B cell (primary cell): ENCODE measurements at regions of chr5 and their contacts with region 1.

Region 1: DNA sequence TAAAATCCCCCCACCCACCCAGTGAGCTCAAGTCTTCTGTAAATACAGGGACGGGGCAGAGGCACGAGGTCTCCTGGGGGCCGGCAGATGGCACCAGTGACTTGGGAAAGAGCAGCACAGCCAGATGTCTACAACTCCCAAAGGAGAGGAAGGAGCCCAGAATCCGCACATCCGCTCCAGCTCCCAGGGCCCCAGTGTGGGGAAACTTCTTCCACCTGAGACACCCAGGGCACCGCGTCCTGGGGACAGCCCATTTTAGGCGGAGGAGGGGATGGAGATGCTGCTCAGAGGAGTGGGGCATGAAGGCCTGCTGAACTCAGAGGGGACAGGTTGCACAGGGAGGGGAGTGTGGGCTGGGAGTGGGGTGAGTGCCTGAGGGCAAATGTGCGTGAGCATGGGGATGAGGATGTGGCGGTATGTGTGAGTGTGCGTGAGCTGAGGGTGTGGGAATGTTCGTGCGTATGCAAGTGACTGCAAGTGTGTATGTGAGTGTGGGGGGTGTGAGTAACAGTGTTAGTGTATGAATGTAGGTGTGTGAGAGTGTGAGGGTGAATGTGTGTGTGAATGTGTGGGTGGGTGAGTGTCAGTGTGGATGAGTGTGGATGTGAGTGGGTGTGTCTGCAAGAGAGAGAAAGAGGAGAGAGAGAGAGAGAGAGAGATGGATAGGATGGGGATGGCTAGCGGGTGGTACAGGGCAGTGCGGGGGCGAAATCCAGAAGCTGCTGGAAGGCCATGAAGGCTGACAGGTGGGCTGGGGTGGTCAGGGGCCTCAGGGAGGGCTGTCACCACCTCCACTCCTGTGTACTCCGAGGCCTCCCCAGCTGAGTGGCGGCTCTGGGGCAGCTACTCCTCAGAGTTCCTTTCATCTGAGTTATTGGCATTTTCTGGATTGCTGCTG is 63.5 kb downstream of the DUSP1 start:
- DNase-seq: peak; percentile 31
- ATAC-seq: peak; percentile 24
- H3K4me3 ChIP-seq: no peak overlapping the region
- H3K4me3 Mint-ChIP-seq: no peak overlapping the region
- H3K27ac ChIP-seq: no peak overlapping the region
- H3K27ac Mint-ChIP-seq: no peak overlapping the region
- H3K4me1 ChIP-seq: no peaks in the 10 kb centered on the region
- H3K4me1 Mint-ChIP-seq: no peaks in the 10 kb centered on the region
- H3K27me3 ChIP-seq: peaks cover 0 to 28% (median 11%) of the 10 kb centered on the region in 4 experiments
- H3K27me3 Mint-ChIP-seq: peaks cover 66% of the 10 kb centered on the region
- CTCF ChIP-seq: no peak

Region 2: DNA sequence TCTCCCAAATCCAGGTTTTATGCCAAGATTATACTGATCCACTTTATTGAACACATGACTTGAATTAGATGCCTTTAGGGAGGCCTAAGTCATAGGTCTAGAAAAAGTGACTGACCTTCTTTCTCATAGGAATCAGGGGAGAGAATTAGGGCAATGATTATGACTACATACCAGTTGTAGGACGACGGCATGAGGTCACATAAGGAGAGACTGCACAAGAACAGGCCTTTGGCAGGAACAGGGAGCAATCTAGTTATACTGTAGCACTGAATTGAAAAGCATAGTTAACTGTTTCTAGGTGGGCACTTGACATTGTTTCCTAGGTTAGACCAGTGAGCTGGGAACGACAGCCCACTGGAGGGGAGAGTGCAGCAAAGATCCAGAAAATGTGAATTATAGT is 371.3 kb after region 1 on chr5:
- CTCF ChIA-PET with region 1: no interaction called
- POLR2A ChIA-PET with region 1: interaction called, 15 read pairs
- intact Hi-C with region 1: no loop called
- DNase-seq: no peak
- ATAC-seq: no peak
- H3K4me3 ChIP-seq: no peak overlapping the region
- H3K4me3 Mint-ChIP-seq: no peak overlapping the region
- H3K27ac ChIP-seq: no peak overlapping the region
- H3K27ac Mint-ChIP-seq: no peak overlapping the region
- H3K4me1 ChIP-seq: no peaks in the 10 kb centered on the region
- H3K4me1 Mint-ChIP-seq: peaks cover 24% of the 10 kb centered on the region
- H3K27me3 ChIP-seq: no peaks in the 10 kb centered on the region
- H3K27me3 Mint-ChIP-seq: no peaks in the 10 kb centered on the region
- CTCF ChIP-seq: no peak